Dorsolateral prefrontal cortex (tissue), 120 donors: ENCODE measurements at regions of chr11 and their contacts with region 1.

Region 1: GRCh38 chr11:130427581-130428315 is 661 bp downstream of the ADAMTS8 start:
- DNase-seq: peak in 8 of 10 donors; percentile 55 to 80 (median 65)
- H3K4me3 ChIP-seq: peak overlapping the region; percentile 46 to 82 (median 66)
- H3K27ac ChIP-seq: peak overlapping the region in 53 of 59 donors; percentile 12 to 91 (median 75)
- H3K27me3 ChIP-seq: peaks cover 0 to 14% (median 0%) of the 10 kb centered on the region in 45 donors
- CTCF ChIP-seq: peak in 53 of 56 donors; percentile 13 to 69 (median 49)

Region 2: GRCh38 chr11:130389335-130389935 is 38.3 kb before region 1 on chr11:
- intact Hi-C with region 1: loop called (anchors 1 to 5 kb)
- DNase-seq: peak in 2 of 10 donors; percentile 25 to 38
- H3K4me3 ChIP-seq: peak overlapping the region in 7 of 59 donors; percentile 0 to 15 (median 8)
- H3K27ac ChIP-seq: peak overlapping the region in 46 of 59 donors; percentile 0 to 76 (median 44)
- H3K27me3 ChIP-seq: no peaks in the 10 kb centered on the region
- CTCF ChIP-seq: no peak